ENCODE measurements at regions of chr5 and their contacts with region 1.

Region 1: GRCh38 chr5:43389679-43390329 is 22.4 kb downstream of the CCL28 start:
- DNase-seq: peak; percentile 74
- H3K4me3 ChIP-seq: no peak overlapping the region
- H3K27ac ChIP-seq: no peak overlapping the region
- H3K4me1 ChIP-seq: no peaks in the 10 kb centered on the region
- CTCF ChIP-seq: peak; percentile 97

Region 2: DNA sequence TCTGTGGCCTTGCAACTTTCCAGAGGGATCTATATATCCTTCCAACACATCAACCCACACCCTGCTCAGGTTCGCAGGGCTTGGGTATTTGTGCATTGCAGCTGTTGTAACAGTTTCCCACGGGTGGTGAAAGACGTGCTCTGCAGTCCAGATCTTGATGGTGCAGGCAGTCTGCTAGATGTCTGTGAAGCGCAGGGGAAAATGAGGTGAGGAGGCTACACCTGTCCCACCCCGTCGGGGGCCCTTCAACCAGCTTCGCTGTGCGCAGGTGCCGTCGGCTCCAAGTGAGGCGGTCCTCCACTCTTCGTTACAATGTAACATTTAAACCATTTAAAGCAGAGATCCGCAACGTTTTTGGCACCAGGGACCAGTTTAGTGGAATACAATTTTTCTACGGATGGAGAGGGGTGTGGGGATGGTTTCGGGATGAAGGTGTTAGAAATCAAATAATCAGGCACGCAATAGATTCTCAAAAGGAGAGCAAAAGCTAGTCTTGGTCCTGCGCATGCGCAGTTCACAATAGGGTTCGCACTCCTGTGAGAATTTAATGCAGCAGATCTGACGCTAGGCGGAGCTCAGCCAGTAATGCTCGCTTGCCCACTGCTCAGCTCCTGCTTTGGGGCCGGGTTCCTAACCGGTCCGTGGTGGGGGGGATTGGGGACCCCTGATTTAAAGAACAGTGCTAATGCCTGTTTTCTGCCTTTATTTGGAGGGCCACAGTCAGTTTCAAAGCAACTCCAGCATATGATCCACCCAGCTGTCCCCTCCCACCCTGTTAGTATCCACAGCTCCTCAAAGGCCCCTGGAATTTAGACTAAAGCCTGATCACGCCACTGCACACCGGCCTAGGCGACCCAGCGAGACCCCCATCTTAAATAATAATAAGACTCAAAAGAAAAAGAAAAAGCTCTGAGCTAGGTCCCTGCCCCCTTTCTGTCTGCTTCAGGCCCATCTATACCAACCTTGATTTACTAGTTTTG is 481.0 kb before region 1 on chr5:
- CTCF ChIA-PET with region 1: no interaction called
- POLR2A ChIA-PET with region 1: no interaction called
- intact Hi-C with region 1: loop called (anchors 2 kb)
- DNase-seq: peak; percentile 85
- H3K4me3 ChIP-seq: peak overlapping the region; percentile 20
- H3K27ac ChIP-seq: no peak overlapping the region
- H3K4me1 ChIP-seq: no peaks in the 10 kb centered on the region
- CTCF ChIP-seq: peak; percentile 76

Region 3: GRCh38 chr5:43227655-43228054 is 162.1 kb before region 1 on chr5:
- CTCF ChIA-PET with region 1: no interaction called
- POLR2A ChIA-PET with region 1: interaction called, 9 read pairs
- intact Hi-C with region 1: loop called (anchors 1 kb)
- DNase-seq: peak; percentile 20
- H3K4me3 ChIP-seq: no peak overlapping the region
- H3K27ac ChIP-seq: no peak overlapping the region
- H3K4me1 ChIP-seq: no peaks in the 10 kb centered on the region
- CTCF ChIP-seq: peak; percentile 74

Measured in OCI-LY7 (cell line).